ENCODE measurements at regions of chr17 and their contacts with region 1.

Region 1: DNA sequence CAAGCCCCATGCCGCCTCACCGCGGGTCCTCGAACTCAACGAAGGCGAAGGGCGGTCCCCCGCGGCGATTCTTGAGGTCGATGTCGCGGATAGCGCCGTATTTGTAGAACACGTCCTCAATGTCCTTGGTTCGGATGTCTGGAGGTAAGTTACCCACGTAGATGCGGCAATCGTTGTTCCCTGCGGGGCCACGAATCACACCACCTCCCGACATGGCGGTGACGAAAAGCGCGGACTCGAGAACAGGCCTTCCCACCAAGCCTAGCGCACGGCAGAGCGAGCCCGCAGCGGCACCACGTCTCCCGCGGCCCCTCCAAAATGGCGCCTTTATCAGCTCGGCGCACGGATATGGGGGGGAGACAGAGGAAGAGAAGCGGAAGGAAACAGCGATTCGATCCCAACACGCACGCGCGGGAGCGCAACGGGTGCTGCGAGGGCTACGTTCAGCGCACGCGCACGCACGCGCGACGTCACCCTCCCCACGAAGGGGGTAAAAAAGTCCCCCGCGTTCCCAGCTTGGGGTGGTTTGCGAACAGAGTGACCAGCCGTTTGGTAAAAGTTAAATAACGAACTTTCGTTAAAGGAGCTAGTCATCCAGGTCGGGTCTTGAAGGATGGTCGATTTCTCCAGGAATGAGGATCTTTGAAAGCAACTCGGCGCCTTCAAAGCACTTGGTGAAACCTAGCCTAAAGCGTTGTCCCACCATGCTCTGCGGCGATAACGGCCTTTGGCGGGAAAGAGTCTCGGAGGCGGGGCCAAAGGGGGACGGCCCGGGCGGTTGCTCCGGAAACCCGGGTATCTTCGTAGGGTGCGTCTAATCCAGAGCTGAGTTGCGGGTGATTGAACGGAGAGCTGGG is at the start of gene SRSF1:
- DNase-seq: peak; percentile 98 to 99
- ATAC-seq: peak; percentile 89 to 92
- H3K4me3 ChIP-seq: peak within 1 kb of the TSS; percentile 71
- H3K27ac ChIP-seq: peak within 1 kb of the TSS; percentile 95 to 97
- H3K4me1 ChIP-seq: peaks cover 39% of the 10 kb centered on the region
- CTCF ChIP-seq: no peak
- EP300 ChIP-seq: no peak
- POLR2A ChIP-seq: peak; percentile 98
- RAD21 ChIP-seq: no peak
- polyA plus RNA-seq, gene SRSF1: 332 and 490 TPM in 2 replicates

Region 2: DNA sequence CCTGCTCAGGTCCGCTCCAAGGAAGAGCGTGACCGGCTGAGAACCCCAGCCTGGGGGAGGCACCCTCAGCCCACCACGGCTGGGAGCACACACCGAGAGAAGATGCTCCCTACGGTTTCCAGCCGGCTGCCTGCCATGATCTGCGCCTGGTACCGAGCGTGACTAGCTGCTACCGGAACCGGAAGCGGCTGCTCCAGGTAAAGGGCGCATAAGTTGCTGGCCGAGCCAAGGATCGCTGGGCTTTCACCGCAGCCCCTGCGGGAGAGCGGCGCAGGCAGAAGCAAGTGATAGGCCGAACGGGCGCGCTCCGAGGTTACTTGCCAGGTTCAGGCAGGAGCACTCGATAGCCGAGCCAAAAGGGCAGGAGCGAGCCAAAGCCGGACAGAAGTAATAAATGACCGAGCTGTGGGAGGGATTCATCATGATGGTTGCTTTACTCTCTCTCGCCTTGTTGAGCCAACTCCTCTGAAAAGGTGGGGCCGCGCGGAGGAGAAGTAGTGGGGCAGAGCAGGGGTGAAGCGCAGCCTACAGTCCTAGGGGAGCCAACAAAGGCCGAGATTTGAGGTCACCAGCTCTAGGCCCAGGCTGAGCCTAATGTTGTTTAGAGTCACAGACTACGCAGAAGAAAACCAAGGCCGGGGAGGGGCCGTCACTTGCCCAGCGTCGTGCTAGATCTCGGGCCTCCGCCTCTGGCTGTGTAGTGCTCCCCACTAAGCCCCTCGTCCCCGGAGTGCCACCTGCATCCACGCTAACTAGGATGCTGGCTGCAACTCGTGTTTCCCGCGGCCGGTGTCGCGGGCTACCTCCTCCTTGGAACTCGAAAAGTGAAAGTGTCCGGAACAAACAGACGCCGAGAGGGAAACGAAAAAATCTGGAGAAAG is 157.0 kb before region 1 on chr17 and contains the start of gene MRPS23:
- CTCF ChIA-PET with region 1: interaction called, 1,377 read pairs
- POLR2A ChIA-PET with region 1: interaction called, 35 read pairs
- DNase-seq: peak; percentile 91 to 99
- ATAC-seq: peak; percentile 93 to 95
- H3K4me3 ChIP-seq: peak within 1 kb of the TSS; percentile 95
- H3K27ac ChIP-seq: peak within 1 kb of the TSS; percentile 93
- H3K4me1 ChIP-seq: peaks cover 54% of the 10 kb centered on the region
- CTCF ChIP-seq: no peak
- EP300 ChIP-seq: no peak
- POLR2A ChIP-seq: peak; percentile 84
- RAD21 ChIP-seq: peak; percentile 28 to 34; a peak in 4 of 5 replicates
- polyA plus RNA-seq, gene MRPS23: 73.2 and 110 TPM in 2 replicates

Region 3: GRCh38 chr17:57875309-57876115 is 131.6 kb before region 1 on chr17:
- CTCF ChIA-PET with region 1: interaction called, 1,377 read pairs
- POLR2A ChIA-PET with region 1: interaction called, 14 read pairs
- DNase-seq: peak; percentile 96 to 98
- ATAC-seq: peak; percentile 83 to 88
- H3K4me3 ChIP-seq: peak overlapping the region; percentile 7; the same call in 1 of the 3 replicates
- H3K27ac ChIP-seq: peak overlapping the region; percentile 92 to 95
- H3K4me1 ChIP-seq: peaks cover 95% of the 10 kb centered on the region
- CTCF ChIP-seq: peak; percentile 54; the same call in 2 of the 3 replicates
- EP300 ChIP-seq: peak; percentile 73 to 92; a peak in 3 of 5 replicates
- POLR2A ChIP-seq: no peak
- RAD21 ChIP-seq: peak; percentile 72 to 86

Region 4: GRCh38 chr17:58082870-58083490 is 75.8 kb after region 1 on chr17 and contains the start of gene DYNLL2:
- CTCF ChIA-PET with region 1: interaction called, 6 read pairs
- POLR2A ChIA-PET with region 1: interaction called, 86 read pairs
- DNase-seq: peak; percentile 91 to 97
- ATAC-seq: peak; percentile 82 to 87
- H3K4me3 ChIP-seq: peak within 1 kb of the TSS; percentile 95
- H3K27ac ChIP-seq: peak within 1 kb of the TSS; percentile 88 to 90
- H3K4me1 ChIP-seq: peaks cover 18% of the 10 kb centered on the region
- CTCF ChIP-seq: no peak
- EP300 ChIP-seq: peak in 1 of 2 experiments; percentile 12; a peak in 1 of 5 replicates
- POLR2A ChIP-seq: peak; percentile 60
- RAD21 ChIP-seq: no peak
- polyA plus RNA-seq, gene DYNLL2: 19.6 TPM in 2 replicates

Region 5: GRCh38 chr17:58112970-58113631 is 105.9 kb after region 1 on chr17:
- CTCF ChIA-PET with region 1: interaction called, 11 read pairs
- POLR2A ChIA-PET with region 1: interaction called, 5 read pairs
- DNase-seq: peak; percentile 78 to 79
- ATAC-seq: peak; percentile 80 to 87
- H3K4me3 ChIP-seq: no peak overlapping the region
- H3K27ac ChIP-seq: no peak overlapping the region
- H3K4me1 ChIP-seq: no peaks in the 10 kb centered on the region
- CTCF ChIP-seq: peak; percentile 96
- EP300 ChIP-seq: no peak
- POLR2A ChIP-seq: no peak
- RAD21 ChIP-seq: peak; percentile 98 to 99

Measured in A549 (cell line).